A549 (cell line): ENCODE measurements at regions of chr22 and their contacts with region 1.

Region 1: DNA sequence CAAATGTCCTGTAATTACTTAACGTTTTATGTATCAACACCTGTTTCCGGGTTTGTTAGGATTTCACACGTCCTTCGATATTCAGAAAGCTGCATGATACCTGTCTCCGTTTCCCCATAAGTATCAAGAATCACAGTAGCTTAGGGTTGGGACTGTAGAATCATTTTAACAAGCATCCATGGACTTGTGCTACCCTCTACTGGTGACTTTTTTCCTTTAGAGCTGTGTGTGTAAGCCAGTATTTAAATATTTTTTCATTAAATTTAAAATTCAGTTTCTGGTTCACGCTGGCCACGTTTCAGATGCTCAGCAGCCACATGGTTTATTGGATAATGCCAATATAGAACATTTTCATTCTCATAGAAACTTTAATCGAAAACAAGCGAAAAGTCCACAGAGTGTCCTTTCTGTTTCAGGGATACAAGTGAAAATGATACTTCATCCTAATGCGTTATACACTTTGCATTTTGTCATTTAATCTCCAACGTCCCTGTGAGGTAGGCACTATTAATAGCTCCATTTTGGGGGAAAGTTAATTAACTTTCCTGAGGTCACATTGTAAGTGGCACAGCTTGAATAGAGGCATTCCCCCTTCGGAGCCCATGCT is 61.5 kb upstream of the SLC25A18 start:
- DNase-seq: peak; percentile 33 to 67
- ATAC-seq: peak; percentile 93 to 94
- H3K4me3 ChIP-seq: no peak overlapping the region
- H3K27ac ChIP-seq: no peak overlapping the region
- H3K4me1 ChIP-seq: no peaks in the 10 kb centered on the region
- CTCF ChIP-seq: peak; percentile 69
- EP300 ChIP-seq: no peak
- POLR2A ChIP-seq: no peak
- RAD21 ChIP-seq: peak; percentile 78 to 82

Region 2: GRCh38 chr22:16917144-16918003 is 584.4 kb before region 1 on chr22:
- CTCF ChIA-PET with region 1: interaction called, 11 read pairs
- POLR2A ChIA-PET with region 1: no interaction called
- DNase-seq: peak; percentile 33 to 65
- ATAC-seq: peak; percentile 83 to 87
- H3K4me3 ChIP-seq: no peak overlapping the region
- H3K27ac ChIP-seq: no peak overlapping the region
- H3K4me1 ChIP-seq: no peaks in the 10 kb centered on the region
- CTCF ChIP-seq: peak; percentile 35; the same call in 2 of the 3 replicates
- EP300 ChIP-seq: no peak
- POLR2A ChIP-seq: no peak
- RAD21 ChIP-seq: peak; percentile 47 to 48; a peak in 3 of 5 replicates

Region 3: DNA sequence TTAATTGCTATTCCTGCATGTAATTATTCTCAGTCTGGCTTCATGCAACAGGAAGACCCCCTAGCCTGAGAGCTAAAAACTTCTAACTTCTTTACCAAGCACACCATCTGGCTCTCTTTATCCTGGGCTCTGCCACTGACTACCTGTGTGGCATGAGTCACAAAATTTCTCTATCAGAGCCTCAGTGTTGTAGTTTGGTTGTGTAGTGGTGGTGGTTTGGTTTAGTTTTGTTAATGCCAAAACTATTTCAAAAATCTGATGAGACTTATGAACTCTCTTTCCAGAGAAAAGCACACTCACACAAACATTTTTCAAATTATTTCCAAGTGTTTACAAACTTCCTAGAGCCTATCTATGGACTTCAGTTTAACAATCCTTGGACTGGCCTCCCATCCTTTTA is 424.5 kb before region 1 on chr22:
- CTCF ChIA-PET with region 1: interaction called, 20 read pairs
- POLR2A ChIA-PET with region 1: no interaction called
- DNase-seq: no peak
- ATAC-seq: no peak
- H3K4me3 ChIP-seq: no peak overlapping the region
- H3K27ac ChIP-seq: no peak overlapping the region
- H3K4me1 ChIP-seq: peaks cover 12% of the 10 kb centered on the region; the same call in 2 of the 3 replicates
- CTCF ChIP-seq: no peak
- EP300 ChIP-seq: no peak
- POLR2A ChIP-seq: no peak
- RAD21 ChIP-seq: no peak

Region 4: DNA sequence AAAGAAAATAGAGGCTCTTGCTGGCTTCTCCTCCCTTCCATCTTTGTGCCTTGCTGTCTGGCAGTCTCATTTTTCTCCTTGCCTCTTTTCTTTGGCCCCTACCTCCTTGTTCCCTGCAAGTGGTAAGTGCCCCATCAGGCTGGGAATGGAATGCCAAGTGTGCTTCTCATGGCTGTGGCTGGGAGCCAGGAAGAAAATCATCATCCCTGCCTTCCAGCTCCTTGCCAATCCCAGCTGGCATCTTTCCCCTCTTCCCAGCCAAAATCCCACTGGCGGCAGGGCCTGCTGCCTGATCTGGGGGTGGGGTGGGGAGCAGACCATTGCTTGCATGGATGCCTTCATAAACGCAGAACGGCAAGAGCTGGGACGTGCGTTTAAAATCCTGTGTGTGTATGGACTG is 34.5 kb after region 1 on chr22:
- CTCF ChIA-PET with region 1: no interaction called
- POLR2A ChIA-PET with region 1: no interaction called
- DNase-seq: no peak
- ATAC-seq: no peak
- H3K4me3 ChIP-seq: no peak overlapping the region
- H3K27ac ChIP-seq: no peak overlapping the region
- H3K4me1 ChIP-seq: no peaks in the 10 kb centered on the region
- CTCF ChIP-seq: no peak
- EP300 ChIP-seq: no peak
- POLR2A ChIP-seq: no peak
- RAD21 ChIP-seq: no peak